ENCODE measurements at regions of chr6 and their contacts with region 1.

Region 1: GRCh38 chr6:139219271-139219729 is 72.5 kb downstream of the TXLNB start:
- DNase-seq: peak; percentile 86
- ATAC-seq: peak; percentile 100
- H3K4me3 Mint-ChIP-seq: no peak overlapping the region
- H3K27ac Mint-ChIP-seq: peak overlapping the region; percentile 48
- H3K4me1 Mint-ChIP-seq: peaks cover 9% of the 10 kb centered on the region
- H3K27me3 Mint-ChIP-seq: no peaks in the 10 kb centered on the region

Region 2: GRCh38 chr6:139124887-139125672 is 94.2 kb before region 1 on chr6:
- CTCF ChIA-PET with region 1: interaction called, 14 read pairs
- DNase-seq: peak; percentile 93
- ATAC-seq: peak; percentile 98
- H3K4me3 Mint-ChIP-seq: peak overlapping the region; percentile 60
- H3K27ac Mint-ChIP-seq: peak overlapping the region; percentile 95
- H3K4me1 Mint-ChIP-seq: peaks cover 39% of the 10 kb centered on the region
- H3K27me3 Mint-ChIP-seq: no peaks in the 10 kb centered on the region

Region 3: GRCh38 chr6:139250296-139251044 is 31.2 kb after region 1 on chr6:
- CTCF ChIA-PET with region 1: interaction called, 18 read pairs
- DNase-seq: peak; percentile 84
- ATAC-seq: peak; percentile 95
- H3K4me3 Mint-ChIP-seq: peak overlapping the region; percentile 44
- H3K27ac Mint-ChIP-seq: peak overlapping the region; percentile 86
- H3K4me1 Mint-ChIP-seq: peaks cover 40% of the 10 kb centered on the region
- H3K27me3 Mint-ChIP-seq: no peaks in the 10 kb centered on the region

Region 4: GRCh38 chr6:139355172-139355571 is 135.9 kb after region 1 on chr6:
- CTCF ChIA-PET with region 1: interaction called, 58 read pairs
- DNase-seq: no peak
- ATAC-seq: no peak
- H3K4me3 Mint-ChIP-seq: no peak overlapping the region
- H3K27ac Mint-ChIP-seq: no peak overlapping the region
- H3K4me1 Mint-ChIP-seq: no peaks in the 10 kb centered on the region
- H3K27me3 Mint-ChIP-seq: no peaks in the 10 kb centered on the region

Region 5: DNA sequence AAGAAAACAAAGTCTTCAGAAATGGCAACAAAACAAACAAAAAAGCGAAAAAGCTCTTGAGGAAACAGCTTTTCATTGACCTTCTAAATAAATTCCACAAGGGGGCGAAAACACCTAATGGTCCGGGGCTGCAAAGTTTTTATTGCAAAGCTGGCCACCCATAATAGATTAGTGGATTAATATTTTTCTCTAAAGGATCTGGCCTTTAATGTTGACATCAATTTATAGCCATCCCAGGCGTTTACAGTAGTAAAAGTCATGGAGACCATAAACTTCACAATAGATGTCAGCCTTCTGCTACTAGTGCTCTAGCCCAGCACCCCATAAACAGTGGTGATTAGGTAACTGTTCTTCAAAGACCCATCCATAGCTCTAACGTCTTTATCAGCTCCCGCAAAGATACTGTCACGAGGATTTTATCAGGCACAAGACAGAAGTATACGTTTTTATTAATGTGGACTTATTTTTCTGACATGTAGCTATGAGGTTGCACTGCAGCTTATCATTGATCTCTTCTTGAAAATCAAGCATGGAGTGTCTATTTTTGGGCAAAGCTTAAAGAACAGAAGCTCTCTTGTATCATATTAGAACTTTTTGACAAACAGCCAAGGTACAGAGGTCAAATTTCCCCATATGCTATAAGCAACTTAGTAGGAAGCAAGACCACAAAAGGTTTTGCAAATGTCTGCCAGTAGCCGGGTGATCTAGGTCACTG is 150.4 kb after region 1 on chr6:
- CTCF ChIA-PET with region 1: interaction called, 110 read pairs
- DNase-seq: no peak
- ATAC-seq: no peak
- H3K4me3 Mint-ChIP-seq: peak overlapping the region; percentile 40
- H3K27ac Mint-ChIP-seq: peak overlapping the region; percentile 81
- H3K4me1 Mint-ChIP-seq: peaks cover 47% of the 10 kb centered on the region
- H3K27me3 Mint-ChIP-seq: no peaks in the 10 kb centered on the region

Measured in activated CD8-positive, alpha-beta memory T cell treated with anti-CD3 and anti-CD28 coated beads, Interleukin-2, amount 10 ng/mL, durations not matched to agents 7 days and 5 days (primary cell).